ENCODE measurements at regions of chr14 and their contacts with region 1.

Region 1: GRCh38 chr14:60212503-60213371 is 36.3 kb upstream of the PPM1A start:
- DNase-seq: no peak
- H3K4me3 ChIP-seq: no peak overlapping the region
- H3K27ac ChIP-seq: no peak overlapping the region
- H3K4me1 ChIP-seq: peaks cover 22% of the 10 kb centered on the region
- H3K27me3 ChIP-seq: no peaks in the 10 kb centered on the region
- CTCF ChIP-seq: no peak

Region 2: DNA sequence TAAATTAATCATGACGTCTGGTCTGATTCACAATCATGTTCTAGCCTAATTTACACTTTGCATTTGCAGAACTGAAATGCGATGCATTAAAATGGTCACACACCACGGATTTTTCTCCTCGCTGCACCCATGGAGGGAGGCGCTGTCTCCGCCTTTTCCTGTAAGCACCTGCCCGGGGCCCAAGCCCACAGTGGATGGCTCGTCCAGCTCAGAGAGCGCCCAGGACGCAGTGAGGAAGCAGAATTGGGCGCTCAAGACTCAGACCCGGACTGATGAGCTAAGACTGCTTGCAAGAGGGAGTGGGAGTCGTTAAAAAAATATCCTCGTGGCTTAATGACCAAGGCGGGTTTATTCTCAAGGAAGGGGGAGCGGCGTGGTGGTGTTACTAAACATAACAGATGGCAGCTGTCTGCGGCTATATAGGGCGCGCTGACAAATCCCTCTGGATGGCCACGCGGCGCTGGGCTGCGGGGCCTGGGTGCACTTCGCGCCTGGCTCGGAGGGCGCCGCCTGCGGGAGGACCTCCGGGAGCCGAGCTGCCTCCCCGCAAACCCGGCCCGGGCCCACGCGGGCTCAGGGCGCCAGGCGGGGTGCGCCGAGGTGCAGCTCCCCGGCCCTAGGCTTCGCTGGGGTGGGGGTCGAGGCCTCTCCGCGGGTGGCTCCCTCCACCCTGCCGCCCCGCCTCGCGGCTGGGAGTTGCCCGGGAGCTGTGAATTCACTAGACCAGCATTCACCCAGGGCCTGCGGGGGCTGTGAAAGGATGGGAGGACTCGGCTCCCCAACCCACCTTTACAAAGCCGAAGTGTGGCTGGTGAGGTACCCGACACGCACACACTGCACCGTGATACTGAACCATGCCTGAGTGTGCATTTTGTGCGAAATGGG is 115.0 kb after region 1 on chr14:
- intact Hi-C with region 1: loop called (anchors 10 kb)
- DNase-seq: peak; percentile 19
- H3K4me3 ChIP-seq: peak overlapping the region; percentile 56
- H3K27ac ChIP-seq: no peak overlapping the region
- H3K4me1 ChIP-seq: peaks cover 22% of the 10 kb centered on the region
- H3K27me3 ChIP-seq: peaks cover 37% of the 10 kb centered on the region
- CTCF ChIP-seq: peak; percentile 29